Activated CD8-positive, alpha-beta T cell treated with anti-CD3 and anti-CD28 coated beads, Interleukin-2, amount 10 ng/mL, durations not matched to agents 7 days and 5 days (primary cell): ENCODE measurements at regions of chr1 and their contacts with region 1.

Region 1: DNA sequence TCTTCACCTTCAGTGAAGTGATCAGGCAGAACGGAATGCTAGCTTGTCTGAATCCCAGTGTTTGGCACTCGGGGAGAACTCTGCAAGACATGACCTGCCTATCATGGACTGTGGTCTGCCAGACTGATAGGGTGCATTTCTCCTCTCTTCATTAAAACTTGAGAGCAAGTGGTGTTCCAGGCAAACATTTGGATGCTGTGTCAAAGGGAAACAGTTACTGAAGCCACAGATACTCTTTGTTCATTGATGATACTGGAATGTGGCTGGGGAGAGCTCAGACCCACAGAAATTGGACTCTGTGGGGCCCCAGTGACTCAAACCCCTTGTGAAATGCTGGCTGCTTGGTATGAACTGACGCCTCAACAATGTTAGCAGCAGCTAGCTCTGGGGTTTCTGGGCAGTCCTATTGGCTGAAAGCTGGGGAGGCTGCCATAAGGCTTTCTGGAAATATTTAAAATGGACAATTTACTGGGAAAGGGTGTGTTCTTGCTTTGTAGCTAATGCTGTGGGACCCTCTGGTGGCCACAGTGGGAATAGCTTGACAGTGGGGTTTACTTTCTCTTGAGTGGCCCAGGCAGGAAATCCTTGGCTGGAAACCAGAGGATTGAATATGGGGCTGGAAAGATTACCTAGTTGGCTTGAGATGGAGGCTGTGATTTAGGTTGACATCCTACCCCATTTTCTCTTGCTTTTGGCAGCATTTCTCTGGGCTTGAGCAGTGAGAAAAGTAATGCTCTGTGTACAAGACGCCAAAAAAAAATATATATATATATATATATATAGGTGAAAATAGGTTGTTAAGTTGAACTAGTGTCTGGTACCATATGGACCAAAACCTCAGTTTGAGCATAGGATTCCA is 8.0 kb upstream of the S100A10 start:
- DNase-seq: peak; percentile 88
- ATAC-seq: peak; percentile 63
- H3K4me3 Mint-ChIP-seq: no peak overlapping the region
- H3K27ac Mint-ChIP-seq: no peak overlapping the region
- H3K4me1 Mint-ChIP-seq: peaks cover 10% of the 10 kb centered on the region
- H3K27me3 Mint-ChIP-seq: peaks cover 35% of the 10 kb centered on the region

Region 2: GRCh38 chr1:151888972-151889570 is 112.5 kb before region 1 on chr1:
- CTCF ChIA-PET with region 1: interaction called, 51 read pairs
- POLR2A ChIA-PET with region 1: no interaction called
- DNase-seq: no peak
- ATAC-seq: peak; percentile 57
- H3K4me3 Mint-ChIP-seq: no peak overlapping the region
- H3K27ac Mint-ChIP-seq: no peak overlapping the region
- H3K4me1 Mint-ChIP-seq: peaks cover 17% of the 10 kb centered on the region
- H3K27me3 Mint-ChIP-seq: no peaks in the 10 kb centered on the region

Region 3: DNA sequence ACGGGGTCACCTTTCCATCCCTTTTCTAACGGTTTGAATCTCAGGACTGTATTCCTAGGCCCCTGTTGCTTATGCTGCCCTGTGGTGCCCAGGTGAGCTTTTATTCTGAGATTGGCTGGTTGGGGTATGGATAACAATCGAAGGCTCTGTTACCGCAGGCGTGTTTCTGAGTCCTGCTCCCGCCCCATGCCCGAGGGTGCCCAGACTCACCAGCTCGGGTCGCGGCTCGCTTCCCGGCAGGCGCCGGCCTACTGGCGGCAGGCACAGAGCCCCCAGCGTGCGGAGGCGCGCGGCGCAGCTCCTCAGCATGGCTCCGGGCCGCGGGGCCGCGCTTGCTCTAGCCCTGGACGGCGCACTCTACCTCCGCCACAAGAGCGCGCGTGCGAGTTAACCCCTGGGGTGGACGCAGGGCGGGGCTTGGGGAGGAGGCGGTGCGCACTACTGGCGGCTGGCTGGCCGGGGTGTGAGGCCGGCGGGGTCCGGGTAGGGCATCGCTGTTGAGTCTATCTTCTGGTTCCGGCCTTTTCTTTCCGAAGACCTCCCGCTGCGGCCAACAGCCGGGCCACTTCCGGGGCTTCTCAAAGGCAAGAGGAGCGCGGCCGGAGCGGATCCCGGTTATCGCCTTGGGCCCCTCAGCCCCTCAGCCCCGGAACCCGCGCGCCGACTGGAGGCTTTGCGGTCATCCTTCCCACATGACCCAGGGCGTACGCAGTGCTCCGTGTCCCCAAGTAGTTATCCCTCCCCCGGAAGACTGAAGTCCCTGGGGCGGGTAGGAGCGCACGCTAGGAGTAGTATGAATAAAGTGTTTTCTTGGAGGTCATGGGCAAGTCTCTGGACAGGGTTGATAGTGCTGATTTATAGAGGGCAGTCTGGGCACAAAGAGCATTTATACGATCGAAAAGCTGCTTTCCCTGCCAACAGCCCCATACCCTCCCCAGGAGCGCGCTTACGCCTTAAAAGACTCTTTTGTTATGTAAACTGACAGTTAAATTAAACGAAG is 92.2 kb before region 1 on chr1 and contains the start of gene THEM4:
- CTCF ChIA-PET with region 1: interaction called, 25 read pairs
- POLR2A ChIA-PET with region 1: no interaction called
- DNase-seq: peak; percentile 96
- ATAC-seq: peak; percentile 94
- H3K4me3 Mint-ChIP-seq: peak within 1 kb of the TSS; percentile 94
- H3K27ac Mint-ChIP-seq: peak within 1 kb of the TSS; percentile 87
- H3K4me1 Mint-ChIP-seq: peaks cover 45% of the 10 kb centered on the region
- H3K27me3 Mint-ChIP-seq: peaks cover 2% of the 10 kb centered on the region
- total RNA-seq, gene THEM4: 29.8 to 31.7 TPM

Region 4: GRCh38 chr1:151934048-151934493 is 67.5 kb before region 1 on chr1:
- CTCF ChIA-PET with region 1: interaction called, 256 read pairs
- POLR2A ChIA-PET with region 1: no interaction called
- DNase-seq: peak; percentile 63
- ATAC-seq: peak; percentile 88
- H3K4me3 Mint-ChIP-seq: no peak overlapping the region
- H3K27ac Mint-ChIP-seq: no peak overlapping the region
- H3K4me1 Mint-ChIP-seq: peaks cover 2% of the 10 kb centered on the region
- H3K27me3 Mint-ChIP-seq: peaks cover 17% of the 10 kb centered on the region

Region 5: GRCh38 chr1:151953409-151954094 is 48.1 kb before region 1 on chr1:
- CTCF ChIA-PET with region 1: interaction called, 21 read pairs
- POLR2A ChIA-PET with region 1: no interaction called
- DNase-seq: no peak
- ATAC-seq: no peak
- H3K4me3 Mint-ChIP-seq: no peak overlapping the region
- H3K27ac Mint-ChIP-seq: no peak overlapping the region
- H3K4me1 Mint-ChIP-seq: no peaks in the 10 kb centered on the region
- H3K27me3 Mint-ChIP-seq: peaks cover 14% of the 10 kb centered on the region

Region 6: DNA sequence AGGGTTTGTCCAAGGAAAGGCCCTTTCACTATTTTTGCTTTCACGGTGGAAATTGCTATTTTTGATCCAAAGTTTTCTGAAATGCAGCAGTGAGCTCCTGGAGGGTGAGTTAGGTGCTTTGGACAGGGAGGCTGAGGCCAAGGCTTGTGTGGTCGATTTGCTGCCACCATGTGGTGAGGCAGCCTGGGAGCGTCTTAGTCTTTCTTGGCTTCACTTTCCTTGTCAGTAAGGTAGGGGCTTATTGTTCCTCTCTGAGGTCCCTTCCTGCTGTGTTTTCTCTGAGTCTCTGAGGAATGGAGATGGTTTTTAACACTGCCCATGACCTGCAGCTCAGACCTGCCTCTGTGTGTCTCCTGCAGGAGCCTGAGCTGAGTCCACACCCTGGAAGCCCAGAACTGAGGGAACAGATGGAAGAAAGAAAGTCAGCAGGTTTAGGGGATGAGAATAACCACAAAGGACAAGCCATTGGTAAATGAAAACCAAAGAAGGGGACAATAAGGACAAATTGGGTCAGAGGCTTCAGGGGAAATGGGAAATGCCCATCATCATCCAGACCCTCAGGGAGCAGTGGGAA is 12.1 kb after region 1 on chr1:
- CTCF ChIA-PET with region 1: interaction called, 116 read pairs
- POLR2A ChIA-PET with region 1: interaction called, 3 read pairs
- DNase-seq: peak; percentile 69
- ATAC-seq: no peak
- H3K4me3 Mint-ChIP-seq: no peak overlapping the region
- H3K27ac Mint-ChIP-seq: no peak overlapping the region
- H3K4me1 Mint-ChIP-seq: peaks cover 5% of the 10 kb centered on the region
- H3K27me3 Mint-ChIP-seq: peaks cover 29% of the 10 kb centered on the region

Region 7: GRCh38 chr1:152039886-152040285 is 38.3 kb after region 1 on chr1:
- CTCF ChIA-PET with region 1: interaction called, 52 read pairs
- POLR2A ChIA-PET with region 1: no interaction called
- DNase-seq: no peak
- ATAC-seq: no peak
- H3K4me3 Mint-ChIP-seq: no peak overlapping the region
- H3K27ac Mint-ChIP-seq: no peak overlapping the region
- H3K4me1 Mint-ChIP-seq: peaks cover 22% of the 10 kb centered on the region
- H3K27me3 Mint-ChIP-seq: no peaks in the 10 kb centered on the region